Gastrocnemius medialis (tissue), 4 donors: ENCODE measurements at regions of chr15 and their contacts with region 1.

Region 1: DNA sequence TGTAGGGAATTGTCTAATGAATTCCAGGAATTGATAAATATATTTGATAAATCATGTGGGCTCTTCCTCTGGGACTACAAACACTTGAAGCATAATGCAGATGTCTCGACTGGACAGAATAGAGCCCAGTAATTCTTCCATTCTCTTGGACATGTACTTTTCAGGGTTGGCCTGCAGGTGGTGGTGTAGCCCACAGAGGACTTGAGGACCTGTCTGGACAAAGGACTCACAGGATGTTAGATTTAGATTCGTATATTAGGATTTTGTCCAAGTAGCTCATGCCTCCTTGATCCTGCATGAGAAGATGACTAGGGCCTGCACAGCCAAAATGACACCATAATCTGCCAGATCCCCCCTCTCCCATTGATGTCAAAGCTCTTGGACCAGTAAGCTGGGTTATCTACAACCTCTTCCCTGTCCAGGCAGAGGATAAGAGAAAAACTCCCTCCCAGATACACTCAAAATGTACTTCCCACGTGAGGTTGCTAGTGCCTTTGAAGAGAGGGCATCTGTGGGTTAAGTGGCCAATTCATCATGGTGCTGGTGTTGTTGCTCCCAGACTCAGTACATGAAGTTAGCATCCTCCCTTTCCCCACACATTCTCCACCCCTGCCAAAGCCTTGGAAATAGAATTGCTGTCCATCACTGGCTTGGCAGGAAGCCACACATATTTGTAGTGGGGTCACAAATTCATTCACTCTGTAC is 88.6 kb upstream of the ZNF280D start:
- DNase-seq: peak in 1 of 2 donors; percentile 55
- ATAC-seq: peak; percentile 65 to 84
- H3K4me3 ChIP-seq: no peak overlapping the region
- H3K27ac ChIP-seq: no peak overlapping the region
- H3K4me1 ChIP-seq: peaks cover 12 to 23% of the 10 kb centered on the region in 2 donors
- H3K27me3 ChIP-seq: no peaks in the 10 kb centered on the region
- CTCF ChIP-seq: peak; percentile 54 to 75 (median 69)
- POLR2A ChIP-seq: no peak

Region 2: DNA sequence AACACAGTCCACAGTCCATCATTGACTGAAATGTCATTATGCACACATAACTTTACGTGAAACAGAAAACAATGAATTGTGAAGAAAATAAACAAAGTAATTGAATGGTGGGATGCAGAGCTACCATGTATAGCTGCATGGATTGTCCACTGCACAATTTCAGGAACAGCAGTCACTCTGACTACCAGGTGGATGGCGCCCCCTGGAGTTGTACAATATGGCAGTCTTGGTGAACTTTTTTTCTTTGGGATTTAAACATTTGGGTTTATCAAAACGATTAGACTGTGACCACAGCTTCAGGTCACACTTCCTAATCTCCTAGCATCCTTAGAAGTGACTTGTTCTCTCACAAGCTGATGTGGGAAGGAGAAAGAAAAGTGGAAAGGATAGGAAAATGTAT is 47.7 kb after region 1 on chr15:
- in situ Hi-C with region 1: no loop called
- intact Hi-C with region 1: loop called (anchors 1 kb)
- DNase-seq: peak in 1 of 2 donors; percentile 35
- ATAC-seq: peak; percentile 46 to 58
- H3K4me3 ChIP-seq: no peak overlapping the region
- H3K27ac ChIP-seq: no peak overlapping the region
- H3K4me1 ChIP-seq: peaks cover 0 to 8% of the 10 kb centered on the region in 2 donors
- H3K27me3 ChIP-seq: no peaks in the 10 kb centered on the region
- CTCF ChIP-seq: peak; percentile 58 to 79 (median 70)
- POLR2A ChIP-seq: no peak

Region 3: DNA sequence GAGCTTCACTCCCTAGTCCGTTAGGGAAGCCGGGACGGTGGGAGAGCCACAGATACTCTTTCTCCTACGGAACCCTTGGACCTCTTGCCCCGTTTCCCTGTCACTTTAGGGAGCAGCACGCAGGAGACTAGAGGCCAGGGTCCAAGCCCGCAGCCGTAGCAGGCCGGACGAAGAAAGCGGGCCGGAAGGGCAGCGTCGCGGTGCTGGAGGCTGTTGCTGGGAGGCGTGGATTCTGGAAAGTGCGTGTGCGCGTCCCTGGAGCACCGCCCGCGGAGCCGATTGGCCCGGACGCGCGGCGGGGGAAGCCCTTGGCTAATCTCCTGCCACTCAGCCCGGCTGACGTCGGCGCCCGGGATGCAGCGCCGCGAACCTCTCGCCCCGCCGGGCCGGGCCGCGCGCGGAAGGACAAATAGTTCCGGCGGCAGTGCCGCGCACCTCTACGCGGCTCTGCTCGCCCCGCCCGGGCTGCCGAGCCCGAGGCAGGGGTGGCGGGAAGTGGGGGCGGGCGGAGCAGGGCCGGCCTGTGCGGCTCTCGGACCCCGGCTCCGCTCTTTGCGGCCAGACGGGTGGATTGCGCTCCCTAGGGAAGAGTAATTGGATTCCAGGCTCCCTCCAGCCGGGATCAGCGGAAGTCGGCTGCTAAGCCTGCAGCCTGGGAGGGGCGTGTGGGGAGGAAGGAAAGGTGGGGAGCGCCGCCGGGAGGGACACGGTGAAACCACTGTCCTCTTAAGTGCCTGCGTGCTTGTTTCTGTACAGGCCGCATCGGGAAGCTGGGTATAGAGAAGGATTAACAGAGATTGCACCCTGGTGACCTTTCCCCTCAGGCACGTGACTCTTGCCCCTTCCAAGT is 65.3 kb after region 1 on chr15:
- in situ Hi-C with region 1: no loop called
- intact Hi-C with region 1: loop called (anchors 5 kb)
- DNase-seq: peak; percentile 89 to 92
- ATAC-seq: peak; percentile 95
- H3K4me3 ChIP-seq: peak overlapping the region; percentile 73 to 80 (median 76)
- H3K27ac ChIP-seq: peak overlapping the region; percentile 93 to 98 (median 94)
- H3K4me1 ChIP-seq: peaks cover 13% of the 10 kb centered on the region in 2 donors
- H3K27me3 ChIP-seq: no peaks in the 10 kb centered on the region
- CTCF ChIP-seq: peak in 1 of 5 experiments; percentile 21
- POLR2A ChIP-seq: peak; percentile 74 to 76

Region 4: DNA sequence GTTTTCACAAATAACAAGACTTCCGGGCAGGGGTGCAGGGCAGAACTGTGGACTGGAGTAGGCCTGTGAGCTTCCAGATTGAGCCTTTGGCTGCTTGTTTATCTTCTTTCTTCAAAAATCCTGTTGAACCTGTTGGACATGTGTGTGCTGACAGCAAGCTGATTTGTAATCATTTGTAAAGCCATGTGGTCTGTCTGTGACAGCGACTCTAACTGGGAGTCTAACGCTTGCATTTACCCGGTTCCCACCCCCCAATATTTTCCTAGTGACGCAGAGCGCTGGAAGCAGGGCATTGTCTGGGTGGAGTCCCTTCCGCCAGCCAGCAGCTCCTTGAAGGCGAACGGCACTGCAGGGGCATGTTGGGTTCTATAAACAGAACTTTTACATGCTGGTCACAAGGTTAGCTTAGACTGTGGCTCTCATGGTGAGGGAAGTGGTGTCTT is 684.1 kb after region 1 on chr15:
- in situ Hi-C with region 1: no loop called
- intact Hi-C with region 1: no loop called
- DNase-seq: no peak
- ATAC-seq: no peak
- H3K4me3 ChIP-seq: no peak overlapping the region
- H3K27ac ChIP-seq: no peak overlapping the region
- H3K4me1 ChIP-seq: no peaks in the 10 kb centered on the region
- H3K27me3 ChIP-seq: no peaks in the 10 kb centered on the region
- CTCF ChIP-seq: no peak
- POLR2A ChIP-seq: no peak